ENCODE measurements at regions of chr3 and their contacts with region 1.

Region 1: DNA sequence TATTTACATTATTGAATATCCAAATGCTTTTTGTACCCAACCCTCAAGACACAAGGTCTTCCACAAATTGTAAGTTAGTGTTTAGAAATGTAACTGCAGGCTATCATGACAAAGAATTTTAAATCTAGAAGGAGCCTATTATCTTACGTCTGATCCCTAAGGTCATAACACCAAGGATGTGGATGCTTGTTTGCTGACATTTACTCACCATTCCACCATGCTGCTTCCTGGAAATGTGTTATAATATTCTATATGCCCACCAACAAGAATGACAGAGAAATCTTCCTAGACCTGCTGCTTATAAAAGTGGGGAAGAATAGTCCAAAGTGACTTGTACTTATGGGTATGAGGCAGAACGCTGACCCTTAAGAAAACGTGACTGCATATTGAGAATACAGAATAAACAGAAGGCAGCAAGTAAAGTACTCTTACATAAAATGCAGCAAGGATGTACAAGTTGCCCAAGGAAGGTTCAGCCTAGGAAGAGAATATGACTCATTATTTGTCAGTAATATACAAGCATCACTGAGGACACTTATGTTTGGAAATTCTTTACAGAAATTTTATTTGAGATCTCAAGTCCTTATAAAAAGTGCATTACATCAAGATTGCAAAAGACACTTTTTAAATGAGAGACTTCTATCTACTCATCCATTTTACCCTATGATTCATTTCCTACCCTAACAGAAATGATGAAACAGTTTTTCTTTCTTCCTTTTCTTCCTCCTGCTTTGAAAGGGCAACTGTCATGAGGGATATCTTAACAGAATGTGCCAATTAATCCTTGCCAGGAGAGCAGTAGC is 59.6 kb downstream of the ESYT3 start:
- DNase-seq: no peak
- ATAC-seq: peak; percentile 95
- H3K4me3 ChIP-seq: no peak overlapping the region
- H3K27ac ChIP-seq: peak overlapping the region; percentile 71 to 85 (median 82)
- H3K4me1 ChIP-seq: peaks cover 36 to 38% of the 10 kb centered on the region in 2 donors
- H3K27me3 ChIP-seq: no peaks in the 10 kb centered on the region
- CTCF ChIP-seq: no peak
- POLR2A ChIP-seq: no peak

Region 2: GRCh38 chr3:138108099-138108498 is 385.9 kb before region 1 on chr3:
- in situ Hi-C with region 1: no loop called
- intact Hi-C with region 1: no loop called
- DNase-seq: no peak
- ATAC-seq: no peak
- H3K4me3 ChIP-seq: no peak overlapping the region
- H3K27ac ChIP-seq: no peak overlapping the region
- H3K4me1 ChIP-seq: peaks cover 0 to under 1% of the 10 kb centered on the region in 2 donors
- H3K27me3 ChIP-seq: no peaks in the 10 kb centered on the region
- CTCF ChIP-seq: no peak
- POLR2A ChIP-seq: no peak

Region 3: GRCh38 chr3:138468886-138469285 is 25.1 kb before region 1 on chr3:
- in situ Hi-C with region 1: no loop called
- intact Hi-C with region 1: loop called (anchors 2 kb)
- DNase-seq: peak; percentile 66 to 73
- ATAC-seq: peak; percentile 95 to 97
- H3K4me3 ChIP-seq: peak overlapping the region in 2 of 4 donors; percentile 4 to 20
- H3K27ac ChIP-seq: peak overlapping the region; percentile 82 to 94 (median 87)
- H3K4me1 ChIP-seq: peaks cover 15 to 37% of the 10 kb centered on the region in 2 donors
- H3K27me3 ChIP-seq: no peaks in the 10 kb centered on the region
- CTCF ChIP-seq: no peak
- POLR2A ChIP-seq: peak; percentile 41 to 45

Measured in gastrocnemius medialis (tissue), 4 donors.